ENCODE measurements at regions of chr1 and their contacts with region 1.

Region 1: GRCh38 chr1:15272009-15272788 is 25.2 kb downstream of the FHAD1 start:
- DNase-seq: no peak
- H3K4me3 ChIP-seq: no peak overlapping the region
- H3K27me3 ChIP-seq: peaks cover 9% of the 10 kb centered on the region
- CTCF ChIP-seq: peak; percentile 81

Region 2: GRCh38 chr1:15128520-15129313 is 143.5 kb before region 1 on chr1:
- CTCF ChIA-PET with region 1: interaction called, 67 read pairs
- POLR2A ChIA-PET with region 1: no interaction called
- DNase-seq: no peak
- H3K4me3 ChIP-seq: no peak overlapping the region
- H3K27me3 ChIP-seq: no peaks in the 10 kb centered on the region
- CTCF ChIP-seq: peak; percentile 96

Region 3: GRCh38 chr1:15141935-15142539 is 130.2 kb before region 1 on chr1:
- CTCF ChIA-PET with region 1: interaction called, 10 read pairs
- POLR2A ChIA-PET with region 1: no interaction called
- DNase-seq: no peak
- H3K4me3 ChIP-seq: no peak overlapping the region
- H3K27me3 ChIP-seq: peaks cover 5% of the 10 kb centered on the region
- CTCF ChIP-seq: no peak

Region 4: DNA sequence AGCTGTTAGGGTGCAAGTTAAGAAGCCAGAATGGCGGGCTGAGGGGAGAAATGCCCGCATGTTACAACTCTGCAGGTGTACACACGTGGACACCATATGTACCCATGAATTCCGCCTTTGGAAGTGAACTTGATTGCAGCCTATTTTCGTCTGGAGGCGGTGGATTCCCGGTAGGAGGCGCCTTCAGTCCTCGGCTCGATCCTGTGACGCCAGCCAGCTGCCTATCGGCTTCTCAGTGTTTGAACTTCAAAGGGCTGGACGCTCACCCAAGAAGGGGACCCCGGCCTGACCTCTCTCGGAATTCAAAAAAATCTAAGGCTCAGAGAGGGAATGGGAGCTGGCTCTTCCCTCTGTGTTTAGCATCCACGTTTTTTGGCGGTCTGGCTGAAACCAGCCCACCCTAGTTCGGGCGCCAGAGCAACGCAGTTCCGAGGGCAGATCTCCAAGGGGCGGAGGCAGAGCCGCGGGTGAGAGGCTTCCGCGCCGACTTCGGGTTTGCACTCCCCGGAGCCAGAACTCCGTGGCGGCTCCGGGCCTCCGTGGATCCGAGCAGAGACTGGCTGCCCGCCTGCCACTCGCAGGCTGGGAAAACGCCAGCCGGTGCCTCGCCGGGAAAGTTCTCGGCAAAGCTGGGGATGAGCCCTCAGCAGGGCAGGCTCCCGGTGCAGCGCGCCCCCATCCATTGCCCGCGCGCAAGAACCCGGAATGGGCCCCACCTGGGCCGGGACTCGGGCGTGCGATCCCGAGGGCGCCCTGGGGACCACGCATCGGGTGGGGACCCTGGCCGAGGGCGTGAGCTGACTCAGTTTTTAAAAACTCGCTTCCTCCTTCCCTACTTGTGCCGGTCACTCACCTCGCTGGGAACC is 119.6 kb before region 1 on chr1:
- CTCF ChIA-PET with region 1: interaction called, 127 read pairs
- POLR2A ChIA-PET with region 1: no interaction called
- DNase-seq: no peak
- H3K4me3 ChIP-seq: peak overlapping the region; percentile 41
- H3K27me3 ChIP-seq: peaks cover 11% of the 10 kb centered on the region
- CTCF ChIP-seq: peak; percentile 81

Region 5: DNA sequence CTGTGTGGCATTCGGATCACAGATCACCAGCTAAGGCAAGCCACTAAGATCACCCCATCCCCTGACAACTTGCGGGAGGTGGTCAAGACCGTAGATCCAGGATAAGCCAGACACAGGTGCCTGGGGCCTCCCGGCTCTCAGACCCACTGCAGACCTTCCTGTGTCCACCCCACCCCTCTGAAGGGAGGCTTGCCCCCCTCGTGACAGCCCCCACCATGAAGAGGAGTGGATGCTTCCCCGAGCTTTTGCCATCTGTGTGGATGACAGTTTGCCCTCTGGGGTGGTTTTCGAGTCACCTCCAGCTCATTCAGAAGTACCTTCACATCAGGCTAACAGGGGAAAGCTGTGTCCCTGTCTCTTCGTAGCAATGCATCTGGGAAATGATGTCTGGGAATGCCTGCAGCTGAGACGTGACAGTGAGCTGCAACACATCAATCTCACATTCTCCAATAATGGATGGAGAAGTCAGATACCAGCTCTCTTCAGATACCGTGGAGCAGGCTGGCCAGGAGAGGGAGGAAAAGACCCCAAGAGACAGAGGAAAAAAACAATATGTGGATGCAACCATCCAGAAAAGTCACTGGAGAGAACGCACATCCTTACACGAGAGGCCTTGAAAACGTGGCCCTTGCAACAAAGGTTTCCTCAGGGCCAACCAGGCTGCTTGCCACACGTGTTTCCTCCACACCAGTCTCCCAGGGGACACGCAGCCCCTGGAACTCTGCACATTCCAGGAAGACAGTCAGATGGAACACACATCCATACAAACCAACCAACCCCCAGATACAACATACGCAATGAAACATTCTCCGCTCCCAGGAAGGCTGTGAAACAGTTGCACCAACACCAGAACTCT is 45.6 kb before region 1 on chr1:
- CTCF ChIA-PET with region 1: no interaction called
- POLR2A ChIA-PET with region 1: no interaction called
- DNase-seq: no peak
- H3K4me3 ChIP-seq: no peak overlapping the region
- H3K27me3 ChIP-seq: peaks cover 6% of the 10 kb centered on the region
- CTCF ChIP-seq: no peak

Region 6: DNA sequence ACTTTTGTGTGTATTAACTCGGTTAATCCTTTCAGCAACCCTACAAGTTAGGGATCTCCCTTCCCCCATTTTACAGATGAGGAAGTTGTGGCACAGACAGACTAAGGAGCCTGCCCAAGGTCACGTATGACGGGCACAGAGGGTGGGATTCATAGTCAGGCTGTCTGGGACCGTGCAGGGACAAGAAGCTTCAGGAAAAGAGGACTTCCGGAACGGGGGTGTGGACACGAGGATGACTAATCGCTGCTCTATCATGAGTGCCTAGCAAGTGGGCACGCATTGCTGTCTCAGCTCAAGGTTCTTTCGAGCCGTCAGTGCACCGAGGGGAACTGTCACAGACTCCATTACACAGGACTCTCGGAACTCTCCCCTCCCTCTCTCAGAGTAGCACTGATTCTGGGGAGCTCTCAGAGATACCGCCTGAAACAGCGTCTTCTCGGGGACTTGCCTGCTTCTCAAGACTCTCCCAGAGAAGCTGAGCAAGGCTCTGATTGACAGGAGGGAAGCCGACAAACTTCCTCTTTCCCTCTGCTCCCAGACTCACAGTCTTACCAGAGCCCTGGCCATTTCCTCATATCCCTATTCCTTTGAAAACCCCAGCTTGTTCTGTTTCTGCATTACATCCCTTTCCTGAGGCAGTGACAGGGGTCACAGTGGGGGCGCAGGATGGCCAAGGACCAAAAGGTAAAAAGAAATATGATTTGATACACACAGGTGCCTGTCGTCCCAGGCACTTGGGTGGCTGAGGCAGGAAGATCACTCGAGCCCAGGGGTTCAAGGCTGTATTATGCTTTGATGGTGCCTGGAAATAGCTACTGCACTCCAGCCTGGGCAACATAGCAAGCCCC is 10.8 kb before region 1 on chr1:
- CTCF ChIA-PET with region 1: interaction called, 21 read pairs
- POLR2A ChIA-PET with region 1: no interaction called
- DNase-seq: no peak
- H3K4me3 ChIP-seq: no peak overlapping the region
- H3K27me3 ChIP-seq: 0 out of 2 replicates have a peak, but pooled peaks cover 2% of the 10 kb centered on the region
- CTCF ChIP-seq: no peak

Measured in BJ (cell line).